Astrocyte of the cerebellum (primary cell): ENCODE measurements at regions of chr4 and their contacts with region 1.

Region 1: DNA sequence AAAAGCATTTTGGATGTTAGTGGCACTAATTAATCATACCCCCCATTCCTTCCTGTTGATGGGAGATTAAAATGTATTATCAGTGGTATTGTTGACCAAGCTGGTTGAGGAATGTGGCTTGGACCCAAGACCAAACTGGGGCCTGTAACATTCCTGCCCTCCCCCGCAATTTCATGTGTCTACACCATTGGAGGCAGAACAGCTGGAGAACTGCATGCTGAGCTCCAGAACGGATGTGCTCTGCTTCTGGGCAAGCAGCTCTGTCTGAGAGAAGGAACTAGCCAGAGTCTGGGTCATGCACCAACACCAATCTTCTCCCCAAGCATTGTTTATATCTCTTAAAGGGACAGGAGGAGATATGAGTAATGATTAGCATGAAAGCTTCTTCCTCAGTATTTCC is 185.5 kb downstream of the CEP135 start:
- DNase-seq: peak; percentile 31
- H3K4me3 ChIP-seq: no peak overlapping the region
- CTCF ChIP-seq: no peak

Region 2: GRCh38 chr4:56183344-56183959 is 49.2 kb after region 1 on chr4:
- in situ Hi-C with region 1: loop called (anchors 10 kb)
- DNase-seq: no peak
- H3K4me3 ChIP-seq: no peak overlapping the region
- CTCF ChIP-seq: no peak